ENCODE measurements at regions of chr12 and their contacts with region 1.

Region 1: DNA sequence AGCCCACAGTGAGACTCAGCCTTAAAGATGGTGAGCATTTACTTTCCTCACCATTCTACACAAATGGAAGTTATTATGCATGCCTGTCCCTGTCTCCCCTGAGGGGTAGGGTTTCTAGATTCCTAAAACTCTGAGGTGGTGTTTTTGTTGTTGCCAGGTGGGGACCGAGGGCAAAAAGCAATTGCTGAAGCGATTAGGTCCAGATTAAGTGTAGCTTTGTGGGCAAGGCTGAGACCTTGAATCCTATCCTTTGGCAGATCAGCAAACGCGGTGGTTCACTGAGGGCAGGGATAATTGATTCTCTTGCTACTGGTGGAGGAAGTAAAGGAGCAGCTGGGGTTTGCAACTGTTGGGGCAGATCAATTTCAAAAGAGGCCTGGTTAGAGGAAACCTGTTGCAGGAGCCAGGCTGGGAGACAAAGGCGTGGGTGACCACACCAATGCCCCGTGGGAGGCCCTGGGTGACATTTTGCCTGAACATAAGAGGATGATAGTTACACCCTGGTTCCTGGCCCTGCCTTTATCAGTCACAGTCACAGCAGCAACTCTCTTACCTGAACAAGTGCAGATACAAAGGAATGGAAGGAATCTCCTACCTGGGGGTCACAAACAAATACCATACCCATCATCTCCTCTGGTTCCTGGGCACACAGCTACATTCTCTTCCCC is 43.4 kb upstream of the RASSF3 start:
- DNase-seq: no peak
- ATAC-seq: no peak
- H3K4me3 Mint-ChIP-seq: no peak overlapping the region
- H3K27ac Mint-ChIP-seq: no peak overlapping the region
- H3K4me1 Mint-ChIP-seq: peaks cover 10% of the 10 kb centered on the region
- H3K27me3 Mint-ChIP-seq: no peaks in the 10 kb centered on the region
- CTCF ChIP-seq: no peak

Region 2: GRCh38 chr12:64729909-64730587 is 163.2 kb after region 1 on chr12:
- CTCF ChIA-PET with region 1: no interaction called
- POLR2A ChIA-PET with region 1: no interaction called
- intact Hi-C with region 1: no loop called
- DNase-seq: no peak
- ATAC-seq: peak; percentile 42
- H3K4me3 Mint-ChIP-seq: no peak overlapping the region
- H3K27ac Mint-ChIP-seq: peak overlapping the region; percentile 86
- H3K4me1 Mint-ChIP-seq: peaks cover 12% of the 10 kb centered on the region
- H3K27me3 Mint-ChIP-seq: no peaks in the 10 kb centered on the region
- CTCF ChIP-seq: no peak

Region 3: DNA sequence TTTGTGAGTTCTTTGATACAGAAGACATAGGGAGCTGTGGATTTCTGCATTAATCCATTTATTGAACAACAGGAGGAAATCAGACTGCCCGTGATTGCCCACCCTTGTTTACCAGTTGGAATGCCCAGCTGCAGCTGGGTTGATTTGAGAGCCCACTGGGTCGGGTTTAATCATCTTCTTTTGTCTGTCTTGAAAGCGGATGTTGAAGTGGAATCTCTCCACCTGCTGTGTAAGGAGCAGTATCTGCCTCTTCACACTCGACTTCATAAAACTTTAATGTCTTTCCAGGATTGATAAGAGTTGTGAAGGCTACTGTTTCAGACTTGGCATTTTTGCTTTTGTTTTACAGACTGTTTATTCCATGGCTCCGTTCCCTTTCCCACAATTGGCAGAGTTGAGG is 297.5 kb after region 1 on chr12:
- CTCF ChIA-PET with region 1: no interaction called
- POLR2A ChIA-PET with region 1: no interaction called
- intact Hi-C with region 1: loop called (anchors 5 kb)
- DNase-seq: no peak
- ATAC-seq: no peak
- H3K4me3 Mint-ChIP-seq: no peak overlapping the region
- H3K27ac Mint-ChIP-seq: no peak overlapping the region
- H3K4me1 Mint-ChIP-seq: no peaks in the 10 kb centered on the region
- H3K27me3 Mint-ChIP-seq: peaks cover 3% of the 10 kb centered on the region
- CTCF ChIP-seq: no peak